ENCODE measurements at regions of chr2 and their contacts with region 1.

Region 1: DNA sequence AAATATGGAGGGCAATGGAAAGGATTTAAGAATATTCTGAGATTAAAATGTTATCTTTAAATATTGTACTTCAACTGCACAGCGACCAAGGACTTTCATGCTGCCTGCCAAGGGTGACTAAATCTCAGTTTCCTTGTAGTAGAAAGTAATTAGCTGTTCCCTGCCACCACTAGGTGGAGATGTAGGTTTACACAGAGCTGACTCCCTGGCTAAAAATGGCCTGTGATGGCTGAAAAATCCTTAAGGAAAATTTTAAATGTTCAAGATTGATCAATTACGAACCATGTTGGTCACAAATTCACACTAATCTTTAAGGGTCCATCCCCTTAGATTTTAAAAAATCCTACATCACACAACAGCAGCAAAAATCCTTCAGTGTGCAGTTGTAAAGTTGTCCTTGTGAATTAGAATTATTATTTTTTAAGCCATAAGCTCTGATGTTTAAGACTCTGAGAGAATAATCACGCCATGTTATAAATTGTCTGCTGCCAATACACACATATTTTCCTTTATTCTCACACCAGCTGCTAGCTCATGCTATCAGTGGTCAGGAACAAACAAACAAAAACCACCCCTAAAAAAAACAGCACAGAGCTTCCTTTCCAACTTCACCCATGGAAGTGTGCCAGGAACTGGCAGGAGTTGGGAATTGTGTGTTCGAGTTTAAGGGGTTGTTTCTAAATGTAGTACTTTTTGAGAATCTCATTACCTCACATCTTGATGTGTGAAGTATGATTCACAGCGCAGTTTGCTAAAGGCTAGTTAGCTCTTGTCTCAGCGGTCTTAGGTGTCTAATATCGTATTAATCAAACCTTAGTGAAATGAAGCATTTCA is 399.8 kb downstream of the TMEM182 start:
- DNase-seq: peak in 6 of 7 donors; percentile 19 to 53 (median 30)
- H3K4me3 ChIP-seq: no peak overlapping the region
- H3K27ac ChIP-seq: no peak overlapping the region
- H3K4me1 ChIP-seq: no peaks in the 10 kb centered on the region
- H3K27me3 ChIP-seq: no peaks in the 10 kb centered on the region
- CTCF ChIP-seq: peak; percentile 48 to 64 (median 56)
- POLR2A ChIP-seq: no peak

Region 2: DNA sequence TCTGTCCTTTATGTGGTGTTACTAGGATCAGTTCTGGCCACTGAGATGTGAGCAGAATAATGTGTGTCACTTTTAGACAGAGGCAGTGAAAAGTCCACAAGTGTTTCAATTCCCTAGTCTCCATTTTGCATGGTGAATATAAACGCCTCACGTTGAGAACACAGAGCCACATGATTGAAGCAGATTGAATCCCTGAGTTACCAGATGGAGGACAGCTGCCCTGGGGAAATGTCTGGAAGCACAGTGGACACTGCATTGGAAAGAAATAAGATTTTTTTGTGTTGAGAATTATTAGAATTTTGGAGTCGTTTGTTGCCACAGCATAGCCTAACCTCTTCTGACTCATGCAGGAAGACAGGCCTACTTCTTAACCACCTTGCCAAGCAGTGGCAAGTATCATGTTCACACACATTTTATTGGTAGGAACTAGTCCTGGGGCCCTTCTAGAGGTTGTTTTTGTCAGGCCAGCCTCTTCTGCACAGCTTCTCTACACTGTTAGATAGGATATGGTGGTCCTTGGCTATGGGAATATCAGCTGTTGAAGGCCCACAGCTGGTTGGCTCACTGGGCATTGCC is 211.2 kb before region 1 on chr2:
- intact Hi-C with region 1: no loop called
- DNase-seq: no peak
- H3K4me3 ChIP-seq: no peak overlapping the region
- H3K27ac ChIP-seq: no peak overlapping the region
- H3K4me1 ChIP-seq: no peaks in the 10 kb centered on the region
- H3K27me3 ChIP-seq: no peaks in the 10 kb centered on the region
- CTCF ChIP-seq: no peak
- POLR2A ChIP-seq: no peak

Region 3: DNA sequence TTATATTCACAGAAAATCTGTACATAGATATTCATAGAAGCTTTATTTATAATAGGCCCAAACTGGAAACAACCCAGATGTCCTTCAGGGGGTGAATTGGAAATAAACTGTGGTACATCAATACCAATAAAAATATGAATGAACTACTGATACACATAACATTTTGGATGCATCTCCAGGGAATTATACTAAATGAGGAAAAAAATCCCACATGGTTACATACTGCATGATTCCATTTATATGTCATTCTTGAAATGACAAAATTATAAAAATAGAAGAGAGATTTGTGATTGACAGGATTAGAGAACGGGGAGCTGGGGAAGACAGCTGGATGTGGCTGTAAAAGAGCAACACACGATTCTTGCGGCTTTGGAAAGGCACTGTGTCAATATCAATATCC is 35.1 kb after region 1 on chr2:
- intact Hi-C with region 1: no loop called
- DNase-seq: no peak
- H3K4me3 ChIP-seq: no peak overlapping the region
- H3K27ac ChIP-seq: no peak overlapping the region
- H3K4me1 ChIP-seq: no peaks in the 10 kb centered on the region
- H3K27me3 ChIP-seq: no peaks in the 10 kb centered on the region
- CTCF ChIP-seq: no peak
- POLR2A ChIP-seq: no peak

Region 4: DNA sequence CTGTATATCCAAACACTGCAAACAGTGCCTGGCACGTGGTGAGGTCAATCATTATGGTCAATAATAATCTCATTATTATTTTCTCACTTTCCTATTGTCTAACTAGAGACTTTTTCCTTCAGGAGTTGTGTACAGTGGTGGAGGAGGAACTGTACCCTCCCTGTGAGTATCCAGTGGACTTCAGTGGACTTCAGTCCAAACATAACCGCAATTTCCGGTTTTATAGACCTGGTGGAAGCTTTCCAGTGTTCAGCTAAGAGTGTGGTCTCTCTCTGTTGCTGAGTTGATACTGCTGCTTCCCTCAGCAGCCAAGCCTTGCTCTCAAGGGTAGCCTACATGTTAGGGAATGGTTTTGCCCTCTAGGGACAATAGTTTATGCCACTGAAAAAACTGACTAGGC is 47.2 kb after region 1 on chr2:
- intact Hi-C with region 1: no loop called
- DNase-seq: no peak
- H3K4me3 ChIP-seq: no peak overlapping the region
- H3K27ac ChIP-seq: no peak overlapping the region
- H3K4me1 ChIP-seq: no peaks in the 10 kb centered on the region
- H3K27me3 ChIP-seq: no peaks in the 10 kb centered on the region
- CTCF ChIP-seq: no peak
- POLR2A ChIP-seq: no peak

Region 5: GRCh38 chr2:104862058-104862941 is 1700.6 kb after region 1 on chr2:
- intact Hi-C with region 1: loop called in 1 of 2 experiments (anchors 10 kb)
- DNase-seq: no peak
- H3K4me3 ChIP-seq: no peak overlapping the region
- H3K27ac ChIP-seq: no peak overlapping the region
- H3K4me1 ChIP-seq: peaks cover 0 to 7% of the 10 kb centered on the region in 2 donors
- H3K27me3 ChIP-seq: peaks cover 100% of the 10 kb centered on the region
- CTCF ChIP-seq: no peak
- POLR2A ChIP-seq: no peak

Measured in adrenal gland (tissue), 19 donors.